Natural killer cell (primary cell): ENCODE measurements at regions of chr7 and their contacts with region 1.

Region 1: DNA sequence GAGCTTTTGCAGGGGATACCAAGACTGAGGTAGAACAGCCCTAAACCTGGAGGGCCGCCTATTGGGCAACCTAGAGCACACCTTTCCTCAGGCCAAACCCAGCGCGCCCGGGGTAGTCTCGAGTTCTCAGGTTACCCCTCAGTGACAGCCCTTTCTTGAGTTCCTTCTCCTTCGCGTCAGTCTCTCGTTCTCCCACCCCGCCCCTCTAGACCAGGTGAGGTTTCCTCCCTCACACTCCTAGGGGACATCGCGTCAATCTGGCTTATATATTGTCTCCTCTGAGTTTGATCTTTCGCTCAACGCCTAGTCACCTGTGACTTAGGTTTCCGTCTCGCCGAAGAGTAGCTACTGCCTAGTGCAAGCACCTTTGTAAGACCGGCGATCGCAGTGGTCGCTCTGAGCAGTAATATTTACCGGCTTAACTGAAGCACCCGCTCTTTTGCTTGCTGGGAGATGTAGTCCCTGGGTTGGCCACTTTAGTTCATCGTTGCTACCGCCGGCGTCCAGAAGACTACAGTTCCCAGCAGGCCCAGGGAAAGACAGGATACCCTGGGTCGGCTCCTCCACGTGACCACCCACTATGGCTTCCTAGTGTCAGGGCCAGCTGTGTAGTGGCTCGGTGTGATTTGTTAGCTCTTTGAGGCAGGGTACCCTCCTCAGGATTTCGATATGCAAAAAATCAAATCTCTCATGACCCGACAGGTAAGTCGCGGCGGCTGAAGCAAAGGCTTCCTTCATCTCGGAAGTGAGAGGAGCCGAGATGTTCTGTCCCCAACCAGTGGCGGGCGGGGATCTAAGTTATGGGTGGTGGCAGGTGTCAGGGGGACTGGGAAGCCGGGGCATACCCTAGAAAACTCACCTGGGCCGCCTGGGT is at the start of gene VPS50:
- DNase-seq: peak; percentile 85 to 97
- ATAC-seq: peak; percentile 98 to 100 (median 99)
- H3K4me3 ChIP-seq: peak within 1 kb of the TSS; percentile 73
- H3K4me3 Mint-ChIP-seq: peak within 1 kb of the TSS; percentile 98
- H3K27ac ChIP-seq: peak within 1 kb of the TSS; percentile 77
- H3K27ac Mint-ChIP-seq: peak within 1 kb of the TSS; percentile 93 to 95
- H3K4me1 ChIP-seq: peaks cover 4% of the 10 kb centered on the region
- H3K4me1 Mint-ChIP-seq: peaks cover 15 to 18% of the 10 kb centered on the region in 2 donors
- H3K27me3 ChIP-seq: no peaks in the 10 kb centered on the region
- H3K27me3 Mint-ChIP-seq: peaks cover 0 to 6% of the 10 kb centered on the region in 2 donors
- CTCF ChIP-seq: no peak
- total RNA-seq, gene VPS50: 29.0 to 32.8 (median 31.7) TPM

Region 2: GRCh38 chr7:92904292-92905131 is 327.5 kb before region 1 on chr7:
- intact Hi-C with region 1: loop called (anchors 10 kb)
- DNase-seq: peak; percentile 65 to 80
- ATAC-seq: peak; percentile 98 to 100 (median 99)
- H3K4me3 ChIP-seq: no peak overlapping the region
- H3K4me3 Mint-ChIP-seq: no peak overlapping the region
- H3K27ac ChIP-seq: no peak overlapping the region
- H3K27ac Mint-ChIP-seq: peak overlapping the region; percentile 62 to 64
- H3K4me1 ChIP-seq: peaks cover 9% of the 10 kb centered on the region
- H3K4me1 Mint-ChIP-seq: peaks cover 18 to 19% of the 10 kb centered on the region in 2 donors
- H3K27me3 ChIP-seq: no peaks in the 10 kb centered on the region
- H3K27me3 Mint-ChIP-seq: peaks cover 0 to 3% of the 10 kb centered on the region in 2 donors
- CTCF ChIP-seq: no peak

Region 3: GRCh38 chr7:93117852-93118530 is 114.0 kb before region 1 on chr7 and contains the start of gene SAMD9:
- intact Hi-C with region 1: loop called (anchors 1 kb)
- DNase-seq: peak; percentile 31 to 88
- ATAC-seq: peak; percentile 99 to 100 (median 99)
- H3K4me3 ChIP-seq: peak within 1 kb of the TSS; percentile 56
- H3K4me3 Mint-ChIP-seq: peak within 1 kb of the TSS; percentile 98
- H3K27ac ChIP-seq: peak within 1 kb of the TSS; percentile 86
- H3K27ac Mint-ChIP-seq: peak within 1 kb of the TSS; percentile 90 to 92
- H3K4me1 ChIP-seq: peaks cover 12% of the 10 kb centered on the region
- H3K4me1 Mint-ChIP-seq: peaks cover 50% of the 10 kb centered on the region in 2 donors
- H3K27me3 ChIP-seq: no peaks in the 10 kb centered on the region
- H3K27me3 Mint-ChIP-seq: no peaks in the 10 kb centered on the region
- CTCF ChIP-seq: no peak
- total RNA-seq, gene SAMD9: 52.3 to 70.0 (median 56.9) TPM

Region 4: DNA sequence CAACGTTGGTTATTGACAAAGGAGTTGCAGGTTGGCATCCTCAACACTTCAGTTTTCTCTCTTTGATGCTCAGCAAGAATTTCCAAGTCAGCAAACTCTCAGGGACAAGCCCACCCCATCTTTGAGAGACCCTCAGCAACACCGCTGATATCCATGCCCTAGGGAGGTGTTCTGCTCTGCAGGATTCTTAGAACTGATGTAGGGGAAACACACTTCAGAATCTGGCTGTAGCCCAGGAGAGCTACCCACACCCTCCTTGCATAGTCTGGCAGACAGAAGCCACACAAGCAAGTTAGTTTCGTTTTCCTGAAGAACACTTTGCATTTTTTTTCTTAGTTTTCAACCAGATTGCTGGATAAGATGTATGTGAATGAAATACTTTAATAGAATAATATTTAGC is 84.7 kb before region 1 on chr7:
- intact Hi-C with region 1: loop called (anchors 5 kb)
- DNase-seq: peak; percentile 25 to 68
- ATAC-seq: peak; percentile 81 to 87 (median 86)
- H3K4me3 ChIP-seq: peak overlapping the region; percentile 75
- H3K4me3 Mint-ChIP-seq: peak overlapping the region; percentile 97
- H3K27ac ChIP-seq: peak overlapping the region; percentile 59
- H3K27ac Mint-ChIP-seq: peak overlapping the region; percentile 94 to 99
- H3K4me1 ChIP-seq: peaks cover 10% of the 10 kb centered on the region
- H3K4me1 Mint-ChIP-seq: peaks cover 40 to 42% of the 10 kb centered on the region in 2 donors
- H3K27me3 ChIP-seq: no peaks in the 10 kb centered on the region
- H3K27me3 Mint-ChIP-seq: no peaks in the 10 kb centered on the region
- CTCF ChIP-seq: no peak

Region 5: DNA sequence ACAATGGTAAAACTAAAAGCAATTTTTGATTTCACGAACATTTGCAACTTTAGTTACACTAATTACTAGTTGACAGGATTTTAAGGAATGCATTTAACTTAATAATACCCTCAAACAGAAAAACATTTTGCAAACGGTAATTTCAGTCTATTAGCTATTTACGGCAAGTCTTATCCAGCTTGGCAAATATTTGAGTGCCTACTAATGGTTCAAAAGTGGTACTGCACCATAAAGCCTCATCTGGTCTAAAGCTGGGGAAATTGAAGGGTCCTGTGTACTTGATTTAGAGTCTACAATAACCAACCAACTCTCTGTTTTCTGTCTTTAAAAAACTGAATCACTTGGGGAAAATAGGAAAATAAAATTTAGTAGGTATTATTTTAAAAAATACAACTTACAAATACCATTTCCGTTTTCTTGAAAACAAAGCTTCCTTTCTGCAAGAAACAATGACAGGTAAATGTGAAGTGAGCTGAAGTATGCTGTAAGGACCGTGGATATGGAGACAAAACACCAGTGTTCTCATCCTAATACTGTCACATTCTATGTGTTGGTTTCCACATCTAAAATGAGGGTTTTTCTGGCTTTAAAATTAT is 142.4 kb after region 1 on chr7:
- intact Hi-C with region 1: no loop called
- DNase-seq: peak in 1 of 2 donors; percentile 31
- ATAC-seq: peak in 1 of 3 donors; percentile 39
- H3K4me3 ChIP-seq: no peak overlapping the region
- H3K4me3 Mint-ChIP-seq: no peak overlapping the region
- H3K27ac ChIP-seq: no peak overlapping the region
- H3K27ac Mint-ChIP-seq: no peak overlapping the region
- H3K4me1 ChIP-seq: no peaks in the 10 kb centered on the region
- H3K4me1 Mint-ChIP-seq: no peaks in the 10 kb centered on the region
- H3K27me3 ChIP-seq: no peaks in the 10 kb centered on the region
- H3K27me3 Mint-ChIP-seq: peaks cover 15 to 23% of the 10 kb centered on the region in 2 donors
- CTCF ChIP-seq: peak; percentile 40

Region 6: GRCh38 chr7:94004024-94004951 is 772.3 kb after region 1 on chr7 and contains the start of gene BET1:
- intact Hi-C with region 1: loop called (anchors 2 kb)
- DNase-seq: peak; percentile 92 to 98
- ATAC-seq: peak; percentile 93 to 98 (median 96)
- H3K4me3 ChIP-seq: peak within 1 kb of the TSS; percentile 85
- H3K4me3 Mint-ChIP-seq: peak within 1 kb of the TSS; percentile 100
- H3K27ac ChIP-seq: peak within 1 kb of the TSS; percentile 79
- H3K27ac Mint-ChIP-seq: peak within 1 kb of the TSS; percentile 99 to 100
- H3K4me1 ChIP-seq: peaks cover 5% of the 10 kb centered on the region
- H3K4me1 Mint-ChIP-seq: peaks cover 25 to 52% of the 10 kb centered on the region in 2 donors
- H3K27me3 ChIP-seq: peaks cover 4% of the 10 kb centered on the region
- H3K27me3 Mint-ChIP-seq: peaks cover 7 to 10% of the 10 kb centered on the region in 2 donors
- CTCF ChIP-seq: no peak
- total RNA-seq, gene BET1: 13.1 to 14.0 (median 13.9) TPM